CD14-positive monocyte (primary cell): ENCODE measurements at regions of chr11 and their contacts with region 1.

Region 1: GRCh38 chr11:47766305-47767227 is 575 bp downstream of the FNBP4 start:
- DNase-seq: peak; percentile 51 to 80 (median 62)
- H3K4me3 ChIP-seq: peak overlapping the region; percentile 80 to 99 (median 80)
- H3K4me3 Mint-ChIP-seq: peak overlapping the region; percentile 88 to 92
- H3K27ac ChIP-seq: peak overlapping the region; percentile 91 to 93
- H3K27ac Mint-ChIP-seq: peak overlapping the region; percentile 94 to 100 (median 97)
- H3K4me1 ChIP-seq: peaks cover 17 to 18% of the 10 kb centered on the region in 2 donors
- H3K4me1 Mint-ChIP-seq: peaks cover 19% of the 10 kb centered on the region
- H3K27me3 ChIP-seq: no peaks in the 10 kb centered on the region
- H3K27me3 Mint-ChIP-seq: peaks cover 0 to 3% (median 0%) of the 10 kb centered on the region in 3 donors
- CTCF ChIP-seq: no peak

Region 2: GRCh38 chr11:47578524-47579460 is 187.8 kb before region 1 on chr11 and contains the starts of genes KBTBD4 and NDUFS3:
- intact Hi-C with region 1: loop called in 1 of 2 experiments (anchors 10 kb)
- DNase-seq: peak; percentile 85 to 91 (median 88)
- H3K4me3 ChIP-seq: peak within 1 kb of the TSS; percentile 62 to 87 (median 83)
- H3K4me3 Mint-ChIP-seq: peak within 1 kb of the TSS; percentile 99 to 100
- H3K27ac ChIP-seq: peak within 1 kb of the TSS; percentile 57 to 89
- H3K27ac Mint-ChIP-seq: peak within 1 kb of the TSS; percentile 88 to 99 (median 98)
- H3K4me1 ChIP-seq: peaks cover 20 to 26% of the 10 kb centered on the region in 2 donors
- H3K4me1 Mint-ChIP-seq: peaks cover 26% of the 10 kb centered on the region
- H3K27me3 ChIP-seq: no peaks in the 10 kb centered on the region
- H3K27me3 Mint-ChIP-seq: no peaks in the 10 kb centered on the region
- CTCF ChIP-seq: no peak
- polyA plus RNA-seq, gene KBTBD4: 2.8 to 16.9 (median 13.8) TPM
- polyA plus RNA-seq, gene NDUFS3: 79.7 to 107 (median 104) TPM

Region 3: GRCh38 chr11:47642099-47642855 is 124.3 kb before region 1 on chr11 and contains the start of gene MTCH2:
- intact Hi-C with region 1: loop called (anchors 2 to 5 kb)
- DNase-seq: peak; percentile 94 to 98 (median 98)
- H3K4me3 ChIP-seq: peak within 1 kb of the TSS; percentile 62 to 94 (median 87)
- H3K4me3 Mint-ChIP-seq: peak within 1 kb of the TSS; percentile 81 to 97
- H3K27ac ChIP-seq: peak within 1 kb of the TSS; percentile 81 to 97
- H3K27ac Mint-ChIP-seq: peak within 1 kb of the TSS; percentile 94 to 98 (median 97)
- H3K4me1 ChIP-seq: peaks cover 14 to 22% of the 10 kb centered on the region in 2 donors
- H3K4me1 Mint-ChIP-seq: peaks cover 16% of the 10 kb centered on the region
- H3K27me3 ChIP-seq: no peaks in the 10 kb centered on the region
- H3K27me3 Mint-ChIP-seq: peaks cover 0 to 3% (median 1%) of the 10 kb centered on the region in 3 donors
- CTCF ChIP-seq: no peak
- polyA plus RNA-seq, gene MTCH2: 31.7 to 116 (median 98.0) TPM